ENCODE measurements at regions of chr19 and their contacts with region 1.

Region 1: GRCh38 chr19:19320362-19321142 is at the starts of genes MAU2 and SUGP1:
- DNase-seq: peak; percentile 73 to 89
- H3K4me3 ChIP-seq: peak within 1 kb of the TSS; percentile 79 to 96 (median 88)
- H3K27ac ChIP-seq: peak within 1 kb of the TSS; percentile 98
- H3K4me1 ChIP-seq: peaks cover 0 to 5% (median 4%) of the 10 kb centered on the region in 4 experiments; a peak in 3 of 7 replicates
- H3K27me3 ChIP-seq: no peaks in the 10 kb centered on the region
- CTCF ChIP-seq: no peak
- EP300 ChIP-seq: 0 out of 3 replicates have a peak, but pooled peaks of 1 of the 2 experiments have one; percentile 37
- POLR2A ChIP-seq: peak; percentile 81 to 99
- RAD21 ChIP-seq: no peak
- total RNA-seq, gene MAU2: 40.8 TPM in 2 replicates
- total RNA-seq, gene SUGP1: 65.2 and 70.5 TPM in 2 replicates

Region 2: GRCh38 chr19:19334063-19334988 is 13.8 kb after region 1 on chr19:
- CTCF ChIA-PET with region 1: interaction called, 17 read pairs
- POLR2A ChIA-PET with region 1: interaction called, 12 read pairs
- DNase-seq: no peak
- H3K4me3 ChIP-seq: no peak overlapping the region
- H3K27ac ChIP-seq: no peak overlapping the region
- H3K4me1 ChIP-seq: no peaks in the 10 kb centered on the region
- H3K27me3 ChIP-seq: no peaks in the 10 kb centered on the region
- CTCF ChIP-seq: no peak
- EP300 ChIP-seq: no peak
- POLR2A ChIP-seq: no peak
- RAD21 ChIP-seq: no peak